Dorsolateral prefrontal cortex (tissue), 120 donors: ENCODE measurements at regions of chr3 and their contacts with region 1.

Region 1: GRCh38 chr3:197949754-197950660 is at the start of gene RPL35A:
- DNase-seq: peak; percentile 75 to 89 (median 84)
- H3K4me3 ChIP-seq: peak within 1 kb of the TSS; percentile 47 to 92 (median 78)
- H3K27ac ChIP-seq: peak within 1 kb of the TSS; percentile 63 to 100 (median 97)
- H3K27me3 ChIP-seq: no peaks in the 10 kb centered on the region
- CTCF ChIP-seq: peak in 21 of 56 donors; percentile 5 to 34 (median 23)
- total RNA-seq, gene RPL35A: 229 to 428 (median 332) TPM

Region 2: GRCh38 chr3:197906023-197906849 is 43.8 kb before region 1 on chr3:
- intact Hi-C with region 1: loop called (anchors 2 to 5 kb)
- DNase-seq: peak; percentile 62 to 86 (median 82)
- H3K4me3 ChIP-seq: peak overlapping the region in 26 of 59 donors; percentile 7 to 48 (median 24)
- H3K27ac ChIP-seq: peak overlapping the region in 1 of 59 donors; percentile 4
- H3K27me3 ChIP-seq: no peaks in the 10 kb centered on the region
- CTCF ChIP-seq: peak; percentile 52 to 97 (median 89)

Region 3: GRCh38 chr3:197959898-197960693 is 10.1 kb after region 1 on chr3 and contains the start of gene LMLN:
- intact Hi-C with region 1: loop called in 1 of 2 experiments (anchors 1 kb)
- DNase-seq: peak; percentile 93 to 99 (median 97)
- H3K4me3 ChIP-seq: peak within 1 kb of the TSS; percentile 68 to 98 (median 89)
- H3K27ac ChIP-seq: peak within 1 kb of the TSS in 56 of 59 donors; percentile 6 to 88 (median 71)
- H3K27me3 ChIP-seq: no peaks in the 10 kb centered on the region
- CTCF ChIP-seq: peak in 25 of 56 donors; percentile 7 to 51 (median 29)
- total RNA-seq, gene LMLN: 12.6 to 31.3 (median 22.7) TPM

Region 4: DNA sequence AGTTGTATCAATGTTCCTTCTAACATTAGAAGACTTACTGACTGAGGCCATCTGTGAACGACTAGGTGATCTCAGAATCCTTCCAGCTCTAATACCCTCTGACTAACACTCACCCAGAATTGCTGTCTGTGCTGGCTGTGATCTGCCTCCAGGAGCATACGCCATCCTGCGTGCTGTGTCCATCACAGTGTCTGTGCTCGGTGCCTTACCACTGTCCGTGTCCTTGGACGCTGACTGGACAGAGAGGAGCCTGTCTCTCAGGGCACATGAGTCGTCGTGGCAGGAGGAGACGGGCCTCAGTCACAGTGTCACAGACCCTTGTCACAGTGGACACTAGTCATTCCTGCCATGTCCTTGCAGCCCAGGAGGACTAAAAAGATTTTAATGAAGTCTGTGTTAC is 93.1 kb after region 1 on chr3:
- intact Hi-C with region 1: no loop called
- DNase-seq: peak in 2 of 10 donors; percentile 16 to 43
- H3K4me3 ChIP-seq: peak overlapping the region in 3 of 59 donors; percentile 10 to 18 (median 16)
- H3K27ac ChIP-seq: peak overlapping the region in 1 of 59 donors; percentile 25
- H3K27me3 ChIP-seq: no peaks in the 10 kb centered on the region
- CTCF ChIP-seq: no peak

Region 5: DNA sequence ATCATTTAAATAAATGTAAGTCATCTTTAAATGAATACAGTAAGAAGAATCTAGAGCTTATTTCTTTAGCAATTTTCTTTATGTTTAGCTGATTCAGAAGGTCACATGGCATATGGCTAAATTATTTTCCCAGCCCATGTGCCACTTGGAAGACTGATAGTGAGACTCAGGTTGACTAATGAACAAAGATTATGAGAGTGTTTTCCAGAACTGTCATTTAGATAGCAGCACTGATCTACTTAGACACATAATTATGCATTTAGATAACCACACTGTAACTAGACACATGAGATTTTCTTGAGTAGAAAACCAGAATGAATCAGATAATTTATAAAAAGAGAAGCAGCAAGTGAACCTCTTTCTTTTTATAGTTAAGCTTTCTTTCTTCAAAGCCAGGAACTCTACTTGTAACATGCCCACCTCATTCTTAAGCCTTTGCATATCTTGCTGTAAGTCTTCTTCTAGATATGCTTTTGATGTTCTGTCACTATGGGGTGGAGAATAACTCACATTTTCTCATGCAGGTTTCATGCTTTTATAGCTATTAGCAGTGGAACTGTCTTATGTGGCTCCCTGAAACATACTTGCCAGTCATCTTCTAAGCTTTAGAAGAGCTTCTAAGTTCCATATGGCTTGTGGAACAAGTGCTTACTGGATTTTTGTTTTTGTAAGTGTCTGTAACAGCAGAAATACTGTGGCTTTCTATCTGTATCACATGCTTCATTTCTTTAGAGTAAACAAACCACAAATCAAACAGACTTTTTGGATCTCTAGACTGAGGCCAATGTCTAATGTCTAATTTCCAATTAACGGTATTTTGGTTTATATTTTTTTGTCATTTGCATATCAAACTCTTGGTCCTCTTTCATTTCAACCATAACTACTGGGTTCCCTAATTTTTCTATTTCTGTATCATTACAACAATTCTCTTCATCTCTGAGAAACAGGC is 111.4 kb after region 1 on chr3:
- intact Hi-C with region 1: no loop called
- DNase-seq: no peak
- H3K4me3 ChIP-seq: no peak overlapping the region
- H3K27ac ChIP-seq: no peak overlapping the region
- H3K27me3 ChIP-seq: peaks cover 0 to 25% (median 0%) of the 10 kb centered on the region in 45 donors
- CTCF ChIP-seq: no peak